Caco-2 (cell line): ENCODE measurements at regions of chr12 and their contacts with region 1.

Region 1: DNA sequence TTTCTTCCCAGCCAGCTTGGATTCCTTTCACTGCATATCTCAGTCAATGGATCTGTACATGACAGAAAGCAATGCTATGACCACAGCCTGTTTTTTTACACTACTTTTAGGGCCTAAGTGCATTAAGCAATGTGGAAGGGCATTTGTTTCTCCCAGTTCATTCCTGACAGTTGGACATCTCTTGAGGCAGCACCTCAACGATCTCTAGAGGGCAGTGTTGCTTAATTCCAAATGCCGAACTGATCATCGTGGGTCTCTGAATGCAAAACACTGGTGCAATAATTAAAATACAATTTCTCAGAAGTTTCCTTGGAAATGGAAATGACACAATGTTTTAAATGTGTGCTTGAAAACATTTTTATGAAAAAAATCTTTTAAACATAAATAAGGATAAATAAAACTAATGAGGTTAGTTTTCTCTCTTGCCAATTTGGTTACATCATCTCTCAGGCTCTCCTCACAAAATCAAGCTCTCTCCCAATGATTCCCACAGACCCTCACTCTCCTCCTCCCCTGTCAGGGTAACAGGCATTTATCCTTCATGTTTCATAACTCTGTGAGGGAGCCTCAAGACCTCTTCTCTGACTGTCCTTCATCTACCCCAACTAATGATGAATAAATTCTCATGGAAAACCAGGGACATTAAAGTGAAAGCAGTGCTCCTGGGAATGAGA is 192.4 kb upstream of the SLC16A7 start:
- DNase-seq: peak; percentile 40 to 58
- H3K4me3 ChIP-seq: no peak overlapping the region
- H3K4me3 Mint-ChIP-seq: no peak overlapping the region
- H3K27ac Mint-ChIP-seq: no peak overlapping the region
- H3K4me1 ChIP-seq: no peaks in the 10 kb centered on the region
- H3K4me1 Mint-ChIP-seq: no peaks in the 10 kb centered on the region
- H3K27me3 ChIP-seq: no peaks in the 10 kb centered on the region; the same call in 1 of the 2 replicates
- H3K27me3 Mint-ChIP-seq: no peaks in the 10 kb centered on the region
- CTCF ChIP-seq: peak; percentile 60 to 77

Region 2: GRCh38 chr12:59780605-59781135 is 377.3 kb after region 1 on chr12:
- CTCF ChIA-PET with region 1: interaction called, 4 read pairs
- POLR2A ChIA-PET with region 1: no interaction called
- intact Hi-C with region 1: loop called (anchors 1 kb)
- DNase-seq: peak in 1 of 2 experiments; percentile 28
- H3K4me3 ChIP-seq: no peak overlapping the region
- H3K4me3 Mint-ChIP-seq: no peak overlapping the region
- H3K27ac Mint-ChIP-seq: no peak overlapping the region
- H3K4me1 ChIP-seq: no peaks in the 10 kb centered on the region
- H3K4me1 Mint-ChIP-seq: no peaks in the 10 kb centered on the region
- H3K27me3 ChIP-seq: no peaks in the 10 kb centered on the region
- H3K27me3 Mint-ChIP-seq: no peaks in the 10 kb centered on the region
- CTCF ChIP-seq: peak; percentile 16 to 45

Region 3: GRCh38 chr12:59808317-59808910 is 405.0 kb after region 1 on chr12:
- CTCF ChIA-PET with region 1: no interaction called
- POLR2A ChIA-PET with region 1: no interaction called
- intact Hi-C with region 1: loop called (anchors 1 kb)
- DNase-seq: peak in 1 of 2 experiments; percentile 17
- H3K4me3 ChIP-seq: no peak overlapping the region
- H3K4me3 Mint-ChIP-seq: no peak overlapping the region
- H3K27ac Mint-ChIP-seq: no peak overlapping the region
- H3K4me1 ChIP-seq: no peaks in the 10 kb centered on the region; the same call in 1 of the 2 replicates
- H3K4me1 Mint-ChIP-seq: no peaks in the 10 kb centered on the region
- H3K27me3 ChIP-seq: no peaks in the 10 kb centered on the region
- H3K27me3 Mint-ChIP-seq: peaks cover 2% of the 10 kb centered on the region
- CTCF ChIP-seq: peak; percentile 67 to 73

Region 4: DNA sequence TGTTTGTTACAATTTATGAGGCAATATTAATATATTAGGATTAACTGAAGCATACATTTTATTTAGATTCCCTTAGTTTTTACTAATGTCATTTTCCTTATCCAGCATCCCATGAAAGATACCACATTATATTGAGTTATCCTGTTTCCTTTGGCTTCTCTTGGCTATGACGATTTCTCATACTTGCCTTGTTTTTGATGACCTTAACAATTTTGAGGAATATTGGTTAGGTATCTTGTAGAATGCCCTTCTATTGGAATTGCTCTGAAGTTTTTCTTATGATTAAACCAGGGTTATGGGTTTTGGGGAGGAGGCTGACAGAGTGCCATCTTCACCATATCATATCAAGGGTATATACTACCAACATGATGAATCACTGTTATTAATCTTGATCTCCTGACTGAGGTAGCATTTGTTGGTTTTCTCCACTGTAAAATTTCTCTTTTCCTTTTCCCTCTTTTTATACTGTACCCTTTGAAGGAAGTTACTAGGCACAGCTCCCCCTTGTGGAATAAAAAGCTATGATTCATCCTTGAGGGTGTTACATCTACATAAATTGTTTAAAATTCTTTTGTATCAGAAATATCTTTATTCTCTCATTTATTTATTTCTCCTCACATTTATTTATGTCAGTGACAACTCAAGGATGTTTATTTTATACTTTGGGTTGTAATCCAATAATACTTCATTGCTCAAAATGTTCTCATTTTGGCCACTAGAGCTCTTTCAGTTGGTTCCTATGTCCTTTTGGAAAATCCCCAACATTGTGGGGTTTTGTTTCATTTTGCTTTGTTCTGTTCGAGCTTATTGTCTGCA is 431.5 kb after region 1 on chr12:
- CTCF ChIA-PET with region 1: no interaction called
- POLR2A ChIA-PET with region 1: no interaction called
- intact Hi-C with region 1: loop called (anchors 1 kb)
- DNase-seq: peak in 1 of 2 experiments; percentile 3
- H3K4me3 ChIP-seq: no peak overlapping the region
- H3K4me3 Mint-ChIP-seq: no peak overlapping the region
- H3K27ac Mint-ChIP-seq: no peak overlapping the region
- H3K4me1 ChIP-seq: no peaks in the 10 kb centered on the region
- H3K4me1 Mint-ChIP-seq: no peaks in the 10 kb centered on the region
- H3K27me3 ChIP-seq: no peaks in the 10 kb centered on the region
- H3K27me3 Mint-ChIP-seq: peaks cover 3% of the 10 kb centered on the region
- CTCF ChIP-seq: peak; percentile 12 to 53

Region 5: GRCh38 chr12:60494244-60494643 is 1090.8 kb after region 1 on chr12:
- CTCF ChIA-PET with region 1: no interaction called
- POLR2A ChIA-PET with region 1: no interaction called
- intact Hi-C with region 1: loop called (anchors 2 kb)
- DNase-seq: peak in 1 of 2 experiments; percentile 33
- H3K4me3 ChIP-seq: no peak overlapping the region
- H3K4me3 Mint-ChIP-seq: no peak overlapping the region
- H3K27ac Mint-ChIP-seq: no peak overlapping the region
- H3K4me1 ChIP-seq: no peaks in the 10 kb centered on the region
- H3K4me1 Mint-ChIP-seq: no peaks in the 10 kb centered on the region
- H3K27me3 ChIP-seq: no peaks in the 10 kb centered on the region
- H3K27me3 Mint-ChIP-seq: no peaks in the 10 kb centered on the region
- CTCF ChIP-seq: peak; percentile 41 to 65